Sigmoid colon (tissue), 7 donors: ENCODE measurements at regions of chr2 and their contacts with region 1.

Region 1: GRCh38 chr2:74919827-74920226 is 38.6 kb upstream of the POLE4 start:
- DNase-seq: no peak
- H3K4me3 ChIP-seq: peak overlapping the region in 3 of 4 donors; percentile 27 to 33 (median 32)
- H3K27ac ChIP-seq: no peak overlapping the region
- H3K4me1 ChIP-seq: peaks cover 0 to 4% (median 4%) of the 10 kb centered on the region in 4 donors
- H3K27me3 ChIP-seq: peaks cover 0 to 15% (median 0%) of the 10 kb centered on the region in 3 donors
- CTCF ChIP-seq: peak; percentile 68 to 91 (median 80)
- EP300 ChIP-seq: no peak
- POLR2A ChIP-seq: no peak

Region 2: DNA sequence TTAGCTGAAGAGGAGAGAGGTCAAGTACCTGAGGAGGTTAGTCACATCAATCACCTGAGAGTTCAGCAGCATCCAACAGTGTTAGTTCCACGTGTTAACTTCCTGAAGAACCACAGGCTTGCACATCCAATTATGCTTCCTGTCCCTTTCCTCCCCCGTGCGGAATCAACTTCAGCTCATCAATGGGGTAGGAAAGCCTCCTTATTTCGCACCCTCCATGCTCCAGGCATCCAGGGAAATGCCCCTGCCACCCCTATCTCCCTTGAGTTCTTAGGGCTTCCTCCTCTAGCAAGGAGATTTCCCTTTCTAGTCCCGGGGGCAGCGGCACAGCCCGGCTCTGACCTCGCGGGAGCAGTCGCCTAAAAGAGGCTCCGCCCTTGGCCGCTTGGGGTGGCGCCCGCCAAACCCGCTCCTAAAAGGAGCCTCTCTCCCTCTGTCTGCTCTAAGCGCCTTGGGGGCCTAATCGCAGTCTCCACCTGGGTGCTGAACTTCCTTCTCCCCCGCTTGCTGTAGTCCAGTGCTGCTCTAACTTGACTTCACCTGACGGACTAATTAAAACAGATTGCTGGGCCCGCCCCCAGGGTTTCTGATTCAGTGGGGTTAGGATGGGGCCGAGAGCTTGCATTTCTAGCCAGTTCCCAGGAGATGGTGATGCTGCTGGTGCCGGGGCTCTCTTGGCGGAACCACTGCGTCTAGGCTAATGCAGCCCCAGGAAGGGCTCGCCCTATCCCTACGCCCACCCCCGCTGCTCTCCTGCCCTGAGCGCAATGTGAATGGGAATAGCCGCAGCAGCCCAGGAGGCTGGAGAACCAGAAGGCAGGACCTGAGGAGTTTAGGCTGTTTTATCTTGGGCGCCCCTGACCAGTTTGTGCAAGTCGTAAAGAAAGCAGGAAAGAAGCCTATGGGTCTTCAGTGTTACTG is 938.5 kb before region 1 on chr2:
- intact Hi-C with region 1: no loop called
- DNase-seq: peak; percentile 68
- H3K4me3 ChIP-seq: peak overlapping the region; percentile 10 to 43 (median 36)
- H3K27ac ChIP-seq: peak overlapping the region in 3 of 4 donors; percentile 18 to 29 (median 23)
- H3K4me1 ChIP-seq: peaks cover 0 to 41% (median 30%) of the 10 kb centered on the region in 4 donors
- H3K27me3 ChIP-seq: peaks cover 2 to 13% (median 9%) of the 10 kb centered on the region in 3 donors
- CTCF ChIP-seq: no peak
- EP300 ChIP-seq: no peak
- POLR2A ChIP-seq: no peak

Region 3: DNA sequence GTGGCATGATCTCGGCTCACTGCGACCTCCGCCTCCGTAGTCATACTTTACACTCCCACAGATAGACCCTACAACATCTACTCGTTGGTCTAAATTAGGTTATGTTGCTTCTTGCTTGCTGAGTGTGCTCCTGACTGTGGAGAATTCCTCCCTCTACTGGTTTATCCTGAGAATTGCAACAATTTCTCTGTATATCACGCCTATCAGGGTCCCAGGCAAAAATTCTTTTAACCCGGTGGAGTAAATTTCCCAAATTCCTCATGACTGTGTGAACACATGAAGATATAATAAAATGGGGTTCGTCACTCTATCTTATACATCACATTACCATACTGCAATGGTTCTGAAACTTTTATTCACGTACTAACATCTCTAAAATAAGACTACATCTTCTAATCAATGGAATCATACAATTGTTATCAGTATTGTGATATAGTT is 484.2 kb after region 1 on chr2:
- intact Hi-C with region 1: loop called (anchors 2 kb)
- DNase-seq: no peak
- H3K4me3 ChIP-seq: no peak overlapping the region
- H3K27ac ChIP-seq: no peak overlapping the region
- H3K4me1 ChIP-seq: peaks cover 0 to 5% (median 0%) of the 10 kb centered on the region in 4 donors
- H3K27me3 ChIP-seq: no peaks in the 10 kb centered on the region
- CTCF ChIP-seq: peak; percentile 39 to 77 (median 65)
- EP300 ChIP-seq: no peak
- POLR2A ChIP-seq: no peak

Region 4: DNA sequence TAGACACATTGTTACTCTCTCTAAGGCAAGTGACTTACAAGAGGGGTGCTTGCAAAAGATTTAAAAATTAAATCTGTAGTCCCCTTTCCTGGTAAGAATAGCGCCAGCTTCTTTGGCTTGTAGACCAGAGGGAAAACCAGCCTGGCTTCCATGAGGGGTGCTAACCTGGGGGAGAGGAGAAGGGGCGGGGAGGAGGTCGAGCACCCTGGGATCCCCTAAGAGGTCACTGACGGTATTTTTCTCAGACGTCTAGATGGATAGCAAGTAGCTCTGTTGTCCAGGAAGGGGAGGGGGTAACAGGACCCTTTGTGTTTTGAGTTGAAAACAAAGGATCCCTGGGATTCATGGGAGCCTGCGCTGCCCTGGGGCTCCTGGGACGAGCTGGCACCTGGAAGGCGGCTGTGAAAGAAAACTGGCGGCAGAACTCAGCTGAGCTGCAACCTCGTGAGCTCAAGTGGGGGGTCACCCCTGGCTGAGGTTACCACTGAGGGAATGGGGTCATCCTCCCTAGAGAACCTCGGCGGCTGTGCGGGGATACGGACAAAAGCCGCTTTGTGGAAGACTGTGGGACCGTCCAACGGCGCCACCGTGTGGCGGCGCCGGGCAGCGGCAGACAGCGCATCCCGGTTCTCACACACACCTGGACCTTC is 689.0 kb after region 1 on chr2:
- intact Hi-C with region 1: loop called (anchors 5 kb)
- DNase-seq: no peak
- H3K4me3 ChIP-seq: no peak overlapping the region
- H3K27ac ChIP-seq: no peak overlapping the region
- H3K4me1 ChIP-seq: peaks cover 0 to 5% (median 1%) of the 10 kb centered on the region in 4 donors
- H3K27me3 ChIP-seq: peaks cover 0 to 22% (median 0%) of the 10 kb centered on the region in 3 donors
- CTCF ChIP-seq: peak in 3 of 4 experiments; percentile 39 to 75 (median 45)
- EP300 ChIP-seq: no peak
- POLR2A ChIP-seq: no peak

Region 5: DNA sequence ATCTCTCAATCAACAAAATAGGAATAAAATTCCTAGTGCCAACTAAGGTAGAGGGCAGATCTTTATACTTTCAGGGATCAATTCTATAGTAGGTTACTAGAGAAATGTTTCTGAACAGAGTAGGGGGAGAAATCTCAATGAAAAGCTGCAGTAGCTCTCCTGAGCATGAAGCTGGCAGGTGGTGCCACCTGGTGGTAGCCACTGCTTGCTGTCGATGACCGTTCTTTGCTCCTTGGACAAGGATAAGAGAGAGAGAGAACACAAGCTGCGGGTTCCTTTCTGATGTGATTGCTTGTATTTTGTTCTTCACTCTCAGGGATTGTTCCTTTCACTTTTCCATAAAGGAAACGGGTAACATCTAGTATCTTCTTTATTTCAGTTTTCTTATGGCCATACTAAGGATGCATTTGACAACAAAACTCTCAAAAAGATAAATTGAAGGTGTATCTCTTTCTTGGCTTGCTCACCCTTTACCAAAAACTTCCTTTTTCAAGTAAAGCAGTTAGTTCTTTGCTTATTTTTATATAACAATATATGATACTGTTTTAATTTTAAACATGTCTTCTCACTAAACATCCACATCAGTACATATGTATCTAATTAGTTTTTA is 708.2 kb after region 1 on chr2:
- intact Hi-C with region 1: loop called (anchors 5 kb)
- DNase-seq: peak; percentile 73
- H3K4me3 ChIP-seq: no peak overlapping the region
- H3K27ac ChIP-seq: no peak overlapping the region
- H3K4me1 ChIP-seq: no peaks in the 10 kb centered on the region
- H3K27me3 ChIP-seq: no peaks in the 10 kb centered on the region
- CTCF ChIP-seq: peak; percentile 16 to 84 (median 56)
- EP300 ChIP-seq: no peak
- POLR2A ChIP-seq: no peak